Activated B cell treated with CpG ODN at 0.5 μM for 24 hours (primary cell): ENCODE measurements at regions of chr19 and their contacts with region 1.

Region 1: GRCh38 chr19:55080968-55081772 is 5.5 kb downstream of the EPS8L1 start:
- DNase-seq: peak; percentile 80
- ATAC-seq: peak; percentile 87
- H3K4me3 Mint-ChIP-seq: peak overlapping the region; percentile 76
- H3K27ac Mint-ChIP-seq: peak overlapping the region; percentile 18
- H3K4me1 Mint-ChIP-seq: peaks cover 31% of the 10 kb centered on the region
- H3K27me3 Mint-ChIP-seq: peaks cover 54% of the 10 kb centered on the region
- CTCF ChIP-seq: no peak

Region 2: DNA sequence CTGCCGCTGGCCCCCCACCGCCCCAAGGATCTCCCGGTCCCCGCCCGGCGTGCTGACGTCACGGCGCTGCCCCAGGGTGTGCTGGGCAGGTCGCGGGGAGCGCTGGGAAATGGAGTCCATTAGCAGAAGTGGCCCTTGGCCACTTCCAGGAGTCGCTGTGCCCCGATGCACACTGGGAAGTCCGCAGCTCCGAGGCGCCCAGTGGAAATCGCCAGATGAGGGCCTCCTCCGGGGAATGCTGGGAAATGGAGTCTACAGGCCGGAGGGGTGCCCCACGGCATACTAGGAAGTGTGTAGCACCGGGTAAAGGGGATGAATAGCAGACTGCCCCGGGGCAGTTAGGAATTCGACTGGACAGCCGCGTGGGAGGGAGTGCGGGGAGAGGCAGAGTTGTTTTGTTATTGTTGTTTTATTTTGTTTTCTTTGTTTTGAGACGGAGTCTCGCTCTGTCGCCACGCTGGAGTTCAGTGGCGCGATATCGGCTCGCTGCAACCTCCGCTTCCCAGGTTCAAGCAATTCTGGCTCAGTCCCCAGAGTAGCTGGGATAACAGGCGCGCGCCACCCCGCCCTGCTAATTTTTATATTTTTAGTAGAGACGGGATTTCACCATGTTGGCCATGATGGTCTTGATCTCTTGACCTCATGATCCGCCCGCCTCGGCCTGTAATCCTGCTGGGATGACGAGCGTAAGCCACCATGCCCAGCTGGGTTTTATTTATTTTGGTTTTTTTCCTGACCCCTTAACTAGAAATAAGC is 36.6 kb after region 1 on chr19 and contains the start of gene PPP1R12C:
- CTCF ChIA-PET with region 1: no interaction called
- POLR2A ChIA-PET with region 1: no interaction called
- intact Hi-C with region 1: loop called (anchors 1 kb)
- DNase-seq: peak; percentile 96
- ATAC-seq: peak; percentile 93
- H3K4me3 Mint-ChIP-seq: peak within 1 kb of the TSS; percentile 97
- H3K27ac Mint-ChIP-seq: peak within 1 kb of the TSS; percentile 87
- H3K4me1 Mint-ChIP-seq: peaks cover 55% of the 10 kb centered on the region
- H3K27me3 Mint-ChIP-seq: no peaks in the 10 kb centered on the region
- CTCF ChIP-seq: no peak
- total RNA-seq, gene PPP1R12C: 115 and 139 TPM in 2 replicates

Region 3: GRCh38 chr19:55549500-55550320 is 468.5 kb after region 1 on chr19:
- CTCF ChIA-PET with region 1: no interaction called
- POLR2A ChIA-PET with region 1: no interaction called
- intact Hi-C with region 1: no loop called
- DNase-seq: no peak
- ATAC-seq: no peak
- H3K4me3 Mint-ChIP-seq: no peak overlapping the region
- H3K27ac Mint-ChIP-seq: no peak overlapping the region
- H3K4me1 Mint-ChIP-seq: peaks cover 2% of the 10 kb centered on the region
- H3K27me3 Mint-ChIP-seq: peaks cover 38% of the 10 kb centered on the region
- CTCF ChIP-seq: no peak